ENCODE measurements at regions of chr7 and their contacts with region 1.

Region 1: GRCh38 chr7:24346129-24346528 is 62.1 kb downstream of the NPY start:
- DNase-seq: no peak
- H3K27ac ChIP-seq: no peak overlapping the region
- CTCF ChIP-seq: no peak

Region 2: GRCh38 chr7:24025094-24025493 is 321.0 kb before region 1 on chr7:
- CTCF ChIA-PET with region 1: no interaction called
- POLR2A ChIA-PET with region 1: interaction called, 10 read pairs
- DNase-seq: no peak
- H3K27ac ChIP-seq: no peak overlapping the region
- CTCF ChIP-seq: no peak